Natural killer cell (primary cell): ENCODE measurements at regions of chr4 and their contacts with region 1.

Region 1: DNA sequence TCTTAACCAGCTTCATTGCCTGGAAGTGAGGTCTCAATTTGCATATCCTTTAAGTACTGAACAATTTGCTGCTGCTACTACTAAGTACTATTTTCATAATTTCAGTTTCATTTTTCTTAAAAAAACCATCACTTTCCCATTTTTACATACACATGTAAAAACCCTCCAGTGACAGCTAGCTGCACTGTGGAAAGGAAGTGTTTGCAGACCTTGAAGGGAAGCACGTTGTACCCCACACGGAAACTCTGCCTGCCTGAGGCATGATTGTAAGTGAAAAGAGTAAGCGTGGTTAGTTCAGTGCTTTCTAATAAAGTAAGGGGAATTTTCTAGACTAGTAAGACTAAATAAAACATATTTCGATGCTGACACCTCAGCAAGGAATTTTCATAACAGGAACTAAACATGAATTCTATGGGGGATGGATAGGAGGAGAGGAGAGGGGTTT is 103.6 kb downstream of the RAPGEF2 start:
- DNase-seq: peak in 1 of 2 donors; percentile 29
- ATAC-seq: peak; percentile 43 to 62 (median 48)
- H3K4me3 ChIP-seq: no peak overlapping the region
- H3K4me3 Mint-ChIP-seq: peak overlapping the region; percentile 48
- H3K27ac ChIP-seq: no peak overlapping the region
- H3K27ac Mint-ChIP-seq: peak overlapping the region; percentile 16 to 55
- H3K4me1 ChIP-seq: peaks cover 7% of the 10 kb centered on the region
- H3K4me1 Mint-ChIP-seq: peaks cover 24 to 25% of the 10 kb centered on the region in 2 donors
- H3K27me3 ChIP-seq: no peaks in the 10 kb centered on the region
- H3K27me3 Mint-ChIP-seq: no peaks in the 10 kb centered on the region
- CTCF ChIP-seq: no peak

Region 2: GRCh38 chr4:158253350-158253980 is 953.0 kb before region 1 on chr4:
- intact Hi-C with region 1: loop called (anchors 10 kb)
- DNase-seq: peak in 1 of 2 donors; percentile 60
- ATAC-seq: peak in 2 of 3 donors; percentile 49 to 54
- H3K4me3 ChIP-seq: no peak overlapping the region
- H3K4me3 Mint-ChIP-seq: no peak overlapping the region
- H3K27ac ChIP-seq: no peak overlapping the region
- H3K27ac Mint-ChIP-seq: no peak overlapping the region
- H3K4me1 ChIP-seq: no peaks in the 10 kb centered on the region
- H3K4me1 Mint-ChIP-seq: peaks cover 0 to 4% of the 10 kb centered on the region in 2 donors
- H3K27me3 ChIP-seq: no peaks in the 10 kb centered on the region
- H3K27me3 Mint-ChIP-seq: peaks cover 0 to 7% of the 10 kb centered on the region in 2 donors
- CTCF ChIP-seq: peak; percentile 23

Region 3: GRCh38 chr4:158729716-158730559 is 476.5 kb before region 1 on chr4:
- intact Hi-C with region 1: loop called (anchors 1 kb)
- DNase-seq: peak; percentile 40 to 77
- ATAC-seq: peak; percentile 84 to 92 (median 90)
- H3K4me3 ChIP-seq: no peak overlapping the region
- H3K4me3 Mint-ChIP-seq: no peak overlapping the region
- H3K27ac ChIP-seq: no peak overlapping the region
- H3K27ac Mint-ChIP-seq: no peak overlapping the region
- H3K4me1 ChIP-seq: no peaks in the 10 kb centered on the region
- H3K4me1 Mint-ChIP-seq: peaks cover 0 to 5% of the 10 kb centered on the region in 2 donors
- H3K27me3 ChIP-seq: peaks cover 15% of the 10 kb centered on the region
- H3K27me3 Mint-ChIP-seq: peaks cover 45% of the 10 kb centered on the region in 2 donors
- CTCF ChIP-seq: peak; percentile 81

Region 4: DNA sequence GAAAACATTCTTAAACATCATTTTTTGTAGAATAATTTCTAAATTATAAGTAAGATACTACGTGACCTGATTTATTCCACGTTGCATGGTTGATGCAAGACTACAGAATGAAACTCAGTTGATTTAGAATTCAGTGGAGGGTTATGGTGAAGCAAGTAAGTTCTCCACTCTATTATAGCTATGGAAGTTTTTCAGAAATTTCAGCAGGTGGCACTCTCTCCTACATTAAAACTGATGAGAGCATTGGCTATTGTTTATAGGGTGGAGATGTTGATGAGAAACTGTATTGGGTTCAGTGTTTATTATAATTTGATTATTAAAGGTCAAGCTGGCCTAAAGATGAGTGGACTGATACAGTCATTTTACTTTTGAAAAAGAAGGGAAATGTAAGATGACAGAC is 349.6 kb before region 1 on chr4:
- intact Hi-C with region 1: loop called (anchors 1 kb)
- DNase-seq: peak in 1 of 2 donors; percentile 58
- ATAC-seq: peak; percentile 68 to 92 (median 80)
- H3K4me3 ChIP-seq: no peak overlapping the region
- H3K4me3 Mint-ChIP-seq: no peak overlapping the region
- H3K27ac ChIP-seq: no peak overlapping the region
- H3K27ac Mint-ChIP-seq: peak overlapping the region in 1 of 2 donors; percentile 44
- H3K4me1 ChIP-seq: no peaks in the 10 kb centered on the region
- H3K4me1 Mint-ChIP-seq: no peaks in the 10 kb centered on the region
- H3K27me3 ChIP-seq: no peaks in the 10 kb centered on the region
- H3K27me3 Mint-ChIP-seq: no peaks in the 10 kb centered on the region
- CTCF ChIP-seq: peak; percentile 67